ENCODE measurements at regions of chr5 and their contacts with region 1.

Region 1: DNA sequence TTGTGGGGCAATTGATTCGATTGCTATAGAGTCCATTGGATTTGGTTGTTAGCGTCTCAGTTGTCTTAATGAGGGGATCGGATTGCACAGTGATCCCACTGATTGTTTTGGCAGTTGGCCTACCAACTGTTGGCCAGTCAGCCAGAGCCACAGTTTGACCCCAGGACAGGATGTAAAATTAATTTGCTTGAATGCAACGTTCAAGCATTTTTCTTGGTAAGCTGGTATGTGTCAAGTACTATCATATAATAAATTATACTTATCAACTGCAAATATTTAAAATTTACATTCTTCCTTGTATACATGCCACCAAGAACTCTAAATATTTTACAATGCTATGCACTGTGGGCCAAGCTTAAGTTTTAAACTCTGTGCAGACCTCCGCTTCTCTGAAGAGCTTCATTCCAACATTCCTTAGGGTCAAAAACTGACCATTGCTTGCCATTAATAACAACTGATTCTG is 80.4 kb upstream of the OSMR start:
- DNase-seq: peak; percentile 86
- ATAC-seq: peak; percentile 90
- H3K4me3 ChIP-seq: no peak overlapping the region
- H3K27ac ChIP-seq: peak overlapping the region; percentile 27; the same call in 1 of the 2 replicates
- H3K4me1 ChIP-seq: peaks cover 5% of the 10 kb centered on the region
- H3K27me3 ChIP-seq: peaks cover 25% of the 10 kb centered on the region
- CTCF ChIP-seq: no peak
- POLR2A ChIP-seq: no peak
- RAD21 ChIP-seq: no peak

Region 2: DNA sequence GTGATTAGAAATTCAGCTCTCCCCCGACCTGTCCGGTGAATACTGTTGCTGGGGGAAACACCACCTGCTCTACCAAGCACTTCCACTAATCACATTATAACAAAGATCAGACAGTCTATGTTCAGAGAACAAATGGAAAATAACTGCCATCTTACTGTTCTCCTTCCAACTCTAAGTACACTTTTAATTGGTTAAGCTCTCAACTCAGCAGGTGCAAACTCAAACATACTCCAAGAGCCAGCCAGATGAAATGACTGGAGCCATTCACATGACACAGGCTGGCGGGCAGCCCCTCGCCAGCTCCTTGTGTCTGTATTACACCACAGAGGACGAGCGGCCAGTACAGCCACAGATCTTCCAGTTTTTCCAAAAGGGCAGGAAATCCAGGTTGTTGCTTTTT is 225.1 kb before region 1 on chr5:
- CTCF ChIA-PET with region 1: no interaction called
- POLR2A ChIA-PET with region 1: no interaction called
- dilution Hi-C with region 1: no loop called
- in situ Hi-C with region 1: no loop called
- intact Hi-C with region 1: no loop called
- DNase-seq: no peak
- ATAC-seq: no peak
- H3K4me3 ChIP-seq: no peak overlapping the region
- H3K27ac ChIP-seq: no peak overlapping the region
- H3K4me1 ChIP-seq: no peaks in the 10 kb centered on the region; the same call in 1 of the 2 replicates
- H3K27me3 ChIP-seq: no peaks in the 10 kb centered on the region
- CTCF ChIP-seq: no peak
- POLR2A ChIP-seq: no peak
- RAD21 ChIP-seq: no peak

Region 3: DNA sequence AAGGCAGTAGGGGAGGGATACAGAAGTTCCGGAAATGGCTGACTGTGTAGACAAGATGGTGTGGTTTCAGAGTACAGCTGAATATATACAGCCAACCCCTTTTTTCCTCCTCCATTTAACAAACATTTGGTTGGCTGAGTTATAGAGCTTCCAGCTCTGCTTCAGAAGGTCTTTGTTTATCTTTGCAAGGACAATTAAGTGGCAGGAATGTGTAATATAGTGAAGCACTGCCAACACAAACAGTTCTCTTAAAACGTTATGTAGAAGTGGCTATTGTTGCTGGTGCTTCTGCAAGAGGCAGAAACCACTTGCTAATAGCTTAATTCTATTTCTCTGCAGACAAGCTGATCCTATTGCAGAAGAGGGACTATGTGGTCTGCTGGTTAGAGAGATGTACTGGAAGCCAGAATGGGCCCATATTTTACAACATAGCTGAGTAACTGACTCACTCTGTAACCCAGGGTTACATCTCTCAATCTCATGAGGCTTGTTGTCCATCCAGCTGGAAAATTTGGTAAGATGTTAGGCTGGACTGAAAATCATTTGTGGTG is 17.7 kb after region 1 on chr5:
- CTCF ChIA-PET with region 1: no interaction called
- POLR2A ChIA-PET with region 1: no interaction called
- dilution Hi-C with region 1: no loop called
- in situ Hi-C with region 1: no loop called
- intact Hi-C with region 1: loop called (anchors 2 kb)
- DNase-seq: peak; percentile 95
- ATAC-seq: peak; percentile 92
- H3K4me3 ChIP-seq: no peak overlapping the region
- H3K27ac ChIP-seq: peak overlapping the region; percentile 64; the same call in 1 of the 2 replicates
- H3K4me1 ChIP-seq: peaks cover 9% of the 10 kb centered on the region
- H3K27me3 ChIP-seq: no peaks in the 10 kb centered on the region
- CTCF ChIP-seq: peak; percentile 15; the same call in 1 of the 2 replicates
- POLR2A ChIP-seq: no peak
- RAD21 ChIP-seq: no peak

Region 4: GRCh38 chr5:38825494-38825893 is 60.1 kb after region 1 on chr5:
- CTCF ChIA-PET with region 1: no interaction called
- POLR2A ChIA-PET with region 1: no interaction called
- dilution Hi-C with region 1: no loop called
- in situ Hi-C with region 1: no loop called
- intact Hi-C with region 1: no loop called
- DNase-seq: peak; percentile 51
- ATAC-seq: no peak
- H3K4me3 ChIP-seq: no peak overlapping the region
- H3K27ac ChIP-seq: no peak overlapping the region
- H3K4me1 ChIP-seq: peaks cover under 1% of the 10 kb centered on the region; the same call in 1 of the 2 replicates
- H3K27me3 ChIP-seq: no peaks in the 10 kb centered on the region
- CTCF ChIP-seq: no peak
- POLR2A ChIP-seq: no peak
- RAD21 ChIP-seq: no peak

Region 5: DNA sequence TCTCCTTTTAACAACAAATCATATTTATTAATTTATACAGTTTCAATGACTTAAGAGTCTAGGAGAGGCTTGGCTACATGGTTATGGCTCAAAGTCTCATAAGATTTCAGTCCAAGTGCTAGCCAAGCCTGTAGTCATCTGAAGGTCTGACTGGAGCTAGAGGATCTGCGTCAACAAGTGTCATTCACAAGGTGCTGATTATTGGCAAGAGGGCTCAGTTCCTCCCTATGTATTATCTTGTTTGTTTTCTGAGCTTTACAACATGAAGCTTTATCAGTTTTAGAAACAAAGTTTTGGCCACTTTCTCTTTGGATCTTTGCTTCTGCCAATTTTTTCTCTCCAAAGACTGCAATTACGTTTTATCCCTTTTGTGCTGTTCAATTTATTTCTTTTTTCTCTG is 214.1 kb after region 1 on chr5:
- CTCF ChIA-PET with region 1: no interaction called
- POLR2A ChIA-PET with region 1: no interaction called
- dilution Hi-C with region 1: no loop called
- in situ Hi-C with region 1: no loop called
- intact Hi-C with region 1: no loop called
- DNase-seq: no peak
- ATAC-seq: no peak
- H3K4me3 ChIP-seq: no peak overlapping the region
- H3K27ac ChIP-seq: no peak overlapping the region
- H3K4me1 ChIP-seq: no peaks in the 10 kb centered on the region; the same call in 1 of the 2 replicates
- H3K27me3 ChIP-seq: no peaks in the 10 kb centered on the region
- CTCF ChIP-seq: no peak
- POLR2A ChIP-seq: no peak
- RAD21 ChIP-seq: no peak